ENCODE measurements at regions of chr1 and their contacts with region 1.

Region 1: GRCh38 chr1:78340006-78340405 is 150.8 kb upstream of the PTGFR start:
- DNase-seq: peak; percentile 90
- ATAC-seq: peak; percentile 93
- H3K4me3 ChIP-seq: peak overlapping the region; percentile 17; the same call in 1 of the 2 replicates
- H3K27ac ChIP-seq: peak overlapping the region; percentile 98
- H3K4me1 ChIP-seq: peaks cover 24% of the 10 kb centered on the region
- H3K27me3 ChIP-seq: no peaks in the 10 kb centered on the region
- CTCF ChIP-seq: no peak

Region 2: DNA sequence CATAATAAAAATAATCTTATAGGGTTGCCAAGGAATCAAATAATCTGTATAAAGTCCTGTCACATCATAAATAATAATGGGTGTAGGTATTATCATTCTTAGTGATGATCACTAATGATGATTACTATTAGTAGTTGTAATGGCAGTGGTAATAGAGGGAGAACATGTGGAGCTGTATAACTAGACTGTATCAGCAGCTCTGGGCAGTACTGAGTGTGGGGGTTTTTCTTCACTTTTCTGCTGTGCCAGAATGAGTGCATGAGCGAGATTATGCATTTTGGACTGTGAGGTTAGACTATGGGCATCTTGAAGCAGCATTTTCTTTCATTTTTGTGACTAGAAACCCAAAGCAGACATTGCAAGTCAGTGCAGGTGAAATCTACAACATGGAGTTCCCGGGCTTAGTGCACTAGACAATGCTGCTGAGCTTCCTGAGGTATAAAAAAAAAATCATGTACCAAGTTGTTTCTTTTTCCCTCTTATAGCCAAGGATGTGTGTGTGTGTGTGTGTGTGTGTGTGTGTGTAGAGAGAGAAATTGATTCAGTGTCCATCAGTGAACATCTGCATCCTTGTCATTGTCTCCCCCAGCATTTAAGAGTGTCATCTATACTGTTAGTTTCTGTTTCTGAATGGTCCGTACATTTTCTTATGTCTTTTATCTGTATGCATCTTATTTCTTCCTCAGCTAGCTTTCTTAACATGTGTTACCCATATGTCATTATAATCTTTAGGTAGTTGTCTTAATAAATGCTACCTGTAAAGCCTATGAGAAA is 207.6 kb before region 1 on chr1:
- CTCF ChIA-PET with region 1: no interaction called
- POLR2A ChIA-PET with region 1: no interaction called
- intact Hi-C with region 1: loop called (anchors 5 kb)
- DNase-seq: no peak
- ATAC-seq: peak; percentile 20; the same call in 1 of the 2 replicates
- H3K4me3 ChIP-seq: no peak overlapping the region
- H3K27ac ChIP-seq: no peak overlapping the region
- H3K4me1 ChIP-seq: peaks cover 6% of the 10 kb centered on the region
- H3K27me3 ChIP-seq: no peaks in the 10 kb centered on the region
- CTCF ChIP-seq: no peak

Region 3: DNA sequence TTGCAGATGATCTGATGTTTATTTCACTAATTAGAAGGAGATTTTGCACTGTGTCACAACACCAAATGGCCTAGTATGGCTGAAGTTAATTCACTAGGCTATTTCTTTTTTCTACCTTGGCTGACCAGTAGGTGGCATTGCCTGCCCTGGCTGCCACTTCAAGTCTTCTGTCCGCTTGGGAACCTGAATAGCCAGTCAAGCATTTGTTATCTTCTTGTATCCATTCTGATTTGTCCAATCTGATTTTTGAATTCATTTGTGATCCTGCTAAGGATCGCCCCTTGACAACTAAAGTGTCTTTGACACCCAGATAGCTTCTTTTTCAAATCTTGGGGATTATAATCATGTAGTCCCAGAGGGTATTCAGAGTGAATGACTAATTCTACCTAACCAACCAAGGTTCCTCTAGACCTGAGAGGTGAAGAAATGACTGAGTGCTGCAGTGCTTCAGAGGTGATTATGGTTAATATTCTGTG is 194.9 kb before region 1 on chr1:
- CTCF ChIA-PET with region 1: no interaction called
- POLR2A ChIA-PET with region 1: no interaction called
- intact Hi-C with region 1: loop called (anchors 1 kb)
- DNase-seq: peak; percentile 85
- ATAC-seq: peak; percentile 74
- H3K4me3 ChIP-seq: no peak overlapping the region
- H3K27ac ChIP-seq: peak overlapping the region; percentile 61
- H3K4me1 ChIP-seq: peaks cover 35% of the 10 kb centered on the region
- H3K27me3 ChIP-seq: no peaks in the 10 kb centered on the region
- CTCF ChIP-seq: peak; percentile 97

Region 4: GRCh38 chr1:78176448-78176847 is 163.6 kb before region 1 on chr1:
- CTCF ChIA-PET with region 1: no interaction called
- POLR2A ChIA-PET with region 1: no interaction called
- intact Hi-C with region 1: loop called (anchors 1 kb)
- DNase-seq: peak; percentile 90
- ATAC-seq: peak; percentile 42
- H3K4me3 ChIP-seq: no peak overlapping the region
- H3K27ac ChIP-seq: peak overlapping the region; percentile 64
- H3K4me1 ChIP-seq: peaks cover 28% of the 10 kb centered on the region
- H3K27me3 ChIP-seq: no peaks in the 10 kb centered on the region
- CTCF ChIP-seq: no peak

Region 5: GRCh38 chr1:78237364-78237916 is 102.6 kb before region 1 on chr1:
- CTCF ChIA-PET with region 1: no interaction called
- POLR2A ChIA-PET with region 1: no interaction called
- intact Hi-C with region 1: loop called (anchors 2 kb)
- DNase-seq: peak; percentile 98
- ATAC-seq: peak; percentile 97
- H3K4me3 ChIP-seq: no peak overlapping the region
- H3K27ac ChIP-seq: peak overlapping the region; percentile 89
- H3K4me1 ChIP-seq: peaks cover 38% of the 10 kb centered on the region
- H3K27me3 ChIP-seq: no peaks in the 10 kb centered on the region
- CTCF ChIP-seq: no peak

Region 6: DNA sequence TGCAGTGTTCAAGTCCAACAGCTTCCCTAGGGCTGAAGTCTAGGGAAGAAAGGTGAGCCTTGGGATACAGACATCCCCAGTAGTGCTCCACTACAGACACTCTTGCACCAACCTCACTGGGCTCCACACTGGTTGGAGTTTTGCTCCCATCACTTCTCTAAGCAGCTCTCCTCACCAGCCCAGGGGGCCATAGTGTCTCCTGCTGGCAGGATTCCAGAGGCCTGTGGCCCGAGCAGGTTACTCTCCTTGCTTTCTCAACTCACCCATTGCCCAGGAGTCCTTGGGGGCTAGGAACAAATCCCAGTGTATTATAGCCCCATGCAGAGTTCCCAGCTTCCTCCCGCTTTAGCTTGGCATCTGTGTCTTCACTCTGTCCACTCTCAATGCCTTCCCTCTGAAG is 362.4 kb after region 1 on chr1:
- CTCF ChIA-PET with region 1: no interaction called
- POLR2A ChIA-PET with region 1: no interaction called
- intact Hi-C with region 1: no loop called
- DNase-seq: no peak
- ATAC-seq: no peak
- H3K4me3 ChIP-seq: no peak overlapping the region
- H3K27ac ChIP-seq: no peak overlapping the region
- H3K4me1 ChIP-seq: no peaks in the 10 kb centered on the region
- H3K27me3 ChIP-seq: no peaks in the 10 kb centered on the region
- CTCF ChIP-seq: no peak